Activated T-helper 1 cell treated with anti-CD3 and anti-CD28 coated beads, Interleukin-12 subunit alpha, Interleukin-12 subunit beta, Interleukin-2, Interleukin-4 antibody, amounts not matched to agents 30 ng/mL and 10 ng/mL and 1 ng/mL, durations not matched to agents 14 hours and 24 hours and 36 hours (primary cell): ENCODE measurements at regions of chr12 and their contacts with region 1.

Region 1: GRCh38 chr12:106302401-106303201 is at the start of gene TCP11L2:
- DNase-seq: peak; percentile 83
- H3K4me3 Mint-ChIP-seq: peak within 1 kb of the TSS; percentile 93
- H3K27ac Mint-ChIP-seq: peak within 1 kb of the TSS; percentile 100
- H3K4me1 Mint-ChIP-seq: peaks cover 49% of the 10 kb centered on the region
- H3K27me3 Mint-ChIP-seq: no peaks in the 10 kb centered on the region
- total RNA-seq, gene TCP11L2: 4.0 and 4.3 TPM in 2 replicates

Region 2: GRCh38 chr12:105330283-105330930 is 972.2 kb before region 1 on chr12 and contains the start of gene C12orf75:
- intact Hi-C with region 1: loop called (anchors 5 kb)
- DNase-seq: peak; percentile 93
- H3K4me3 Mint-ChIP-seq: peak within 1 kb of the TSS; percentile 87
- H3K27ac Mint-ChIP-seq: peak within 1 kb of the TSS; percentile 91
- H3K4me1 Mint-ChIP-seq: peaks cover 83% of the 10 kb centered on the region
- H3K27me3 Mint-ChIP-seq: no peaks in the 10 kb centered on the region
- total RNA-seq, gene C12orf75: 87.8 and 93.4 TPM in 2 replicates

Region 3: GRCh38 chr12:106247674-106248311 is 54.8 kb before region 1 on chr12 and contains the start of gene CKAP4:
- intact Hi-C with region 1: loop called (anchors 1 kb)
- DNase-seq: peak; percentile 37
- H3K4me3 Mint-ChIP-seq: peak within 1 kb of the TSS; percentile 66
- H3K27ac Mint-ChIP-seq: peak within 1 kb of the TSS; percentile 15
- H3K4me1 Mint-ChIP-seq: no peaks in the 10 kb centered on the region
- H3K27me3 Mint-ChIP-seq: peaks cover 14% of the 10 kb centered on the region
- total RNA-seq, gene CKAP4: 4.8 and 5.1 TPM in 2 replicates

Region 4: DNA sequence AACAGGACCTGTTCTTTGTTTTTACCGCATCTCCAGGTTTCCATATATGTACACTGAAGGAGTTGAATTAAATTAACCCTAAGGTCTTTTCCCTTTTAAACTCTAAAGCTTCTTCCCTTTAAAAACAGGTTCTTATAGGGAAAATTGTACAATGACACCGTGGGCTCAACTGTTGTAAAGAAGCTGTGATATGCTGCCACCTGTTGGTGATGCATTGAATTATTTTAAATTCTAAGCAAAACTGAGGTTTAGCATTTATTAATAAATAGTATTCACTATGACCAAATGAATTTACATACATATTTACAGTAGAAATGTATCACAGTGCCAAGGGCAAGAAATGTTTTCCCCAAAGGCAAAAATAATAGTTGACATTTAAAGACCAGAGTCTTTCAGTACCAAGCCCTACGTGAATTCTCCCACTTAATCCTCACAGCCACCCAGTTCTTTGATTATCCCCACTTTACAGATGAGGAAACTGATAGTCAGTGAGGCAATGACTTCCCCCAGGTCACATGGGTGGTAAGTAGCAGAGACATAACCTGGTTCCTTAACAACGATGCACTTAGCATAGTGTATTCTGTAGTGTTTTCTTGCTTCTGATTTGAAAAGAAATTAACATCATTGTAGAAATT is 617.4 kb after region 1 on chr12:
- intact Hi-C with region 1: loop called (anchors 5 kb)
- DNase-seq: no peak
- H3K4me3 Mint-ChIP-seq: no peak overlapping the region
- H3K27ac Mint-ChIP-seq: no peak overlapping the region
- H3K4me1 Mint-ChIP-seq: peaks cover 9% of the 10 kb centered on the region
- H3K27me3 Mint-ChIP-seq: peaks cover 11% of the 10 kb centered on the region

Region 5: DNA sequence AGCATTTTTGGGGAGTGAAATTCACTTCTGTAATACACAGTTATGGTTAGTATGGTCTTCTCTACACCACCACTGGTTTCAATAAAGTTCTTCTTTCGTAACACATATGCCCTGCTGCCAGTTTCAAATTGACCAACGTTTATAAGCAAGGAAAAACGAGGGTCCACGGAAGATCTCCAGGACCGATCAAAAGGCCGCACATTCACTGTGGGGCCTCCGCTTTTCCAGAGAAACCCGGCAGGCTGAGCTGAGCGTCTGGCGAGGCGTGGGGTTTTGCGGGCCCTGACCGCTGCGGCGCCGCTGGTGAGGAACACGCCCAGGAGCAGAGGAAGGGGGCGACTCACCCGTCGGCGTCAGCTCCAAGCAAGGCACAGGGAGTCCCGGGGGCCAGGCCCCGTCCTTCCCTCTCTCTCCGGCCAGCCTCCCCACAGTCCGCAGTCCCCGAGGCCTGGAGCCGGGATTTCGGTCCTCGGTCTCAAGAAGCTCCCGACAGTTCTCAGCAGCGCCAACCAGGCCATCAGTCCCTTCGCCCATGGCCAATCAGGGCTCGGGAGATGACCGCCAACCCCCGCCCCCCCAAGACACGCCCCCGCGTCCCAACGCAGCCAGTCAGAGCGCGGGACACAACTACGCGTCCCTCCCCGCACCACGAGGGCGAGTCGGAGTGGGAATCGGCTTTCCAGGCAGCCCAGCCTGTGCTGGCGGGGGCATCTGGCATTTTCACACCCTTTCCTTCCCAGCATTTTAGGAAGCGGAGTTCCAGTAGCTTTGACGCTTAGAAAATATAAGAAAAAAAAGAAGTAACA is 684.2 kb after region 1 on chr12 and contains the start of gene MTERF2:
- intact Hi-C with region 1: loop called (anchors 2 kb)
- DNase-seq: peak; percentile 69
- H3K4me3 Mint-ChIP-seq: peak within 1 kb of the TSS; percentile 91
- H3K27ac Mint-ChIP-seq: peak within 1 kb of the TSS; percentile 85
- H3K4me1 Mint-ChIP-seq: peaks cover 41% of the 10 kb centered on the region
- H3K27me3 Mint-ChIP-seq: peaks cover 2% of the 10 kb centered on the region
- total RNA-seq, gene MTERF2: 3.9 and 5.2 TPM in 2 replicates